ENCODE measurements at regions of chr1 and their contacts with region 1.

Region 1: GRCh38 chr1:108646648-108647269 is 14.1 kb downstream of the HENMT1 start:
- DNase-seq: peak; percentile 51 to 93 (median 86)
- ATAC-seq: peak; percentile 78
- H3K4me3 ChIP-seq: no peak overlapping the region
- H3K27ac ChIP-seq: peak overlapping the region; percentile 75 to 97
- H3K4me1 ChIP-seq: peaks cover 0 to 56% of the 10 kb centered on the region in 2 donors
- H3K27me3 ChIP-seq: no peaks in the 10 kb centered on the region
- CTCF ChIP-seq: no peak

Region 2: DNA sequence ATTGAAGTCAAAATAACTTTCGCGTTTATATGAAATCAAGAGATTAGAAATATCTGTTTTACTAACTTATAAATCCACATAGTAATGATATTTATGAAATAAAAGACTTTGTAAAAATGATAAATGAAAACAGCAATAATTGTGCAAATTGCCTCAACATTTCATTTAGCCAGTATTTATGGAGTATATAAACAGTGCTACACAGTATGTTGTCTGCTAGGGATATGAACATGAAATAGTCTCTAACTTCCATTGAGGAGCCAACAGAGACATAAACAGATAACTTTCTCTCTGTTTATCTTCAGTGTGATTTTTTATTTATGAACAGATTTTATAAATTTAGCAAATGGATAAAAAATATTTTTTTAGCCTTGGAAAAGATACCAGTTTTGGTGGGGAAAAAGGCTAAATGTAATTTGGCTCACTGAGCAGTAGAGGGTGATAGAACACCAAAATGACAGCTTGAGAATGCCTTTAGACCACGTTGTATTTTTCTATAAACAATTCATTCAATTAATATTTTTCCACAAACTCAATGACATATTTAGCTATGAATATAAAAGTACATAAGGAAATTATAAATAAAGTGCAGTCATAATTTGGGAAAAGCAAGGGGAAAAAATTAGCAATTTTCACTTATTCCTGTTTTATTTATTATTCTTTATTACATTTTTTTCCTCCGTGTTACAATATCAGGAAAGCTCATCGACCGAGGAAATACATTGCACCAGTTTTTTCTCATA is 134.3 kb before region 1 on chr1:
- intact Hi-C with region 1: loop called in 1 of 2 experiments (anchors 5 kb)
- DNase-seq: peak in 1 of 4 donors; percentile 52
- ATAC-seq: peak; percentile 78
- H3K4me3 ChIP-seq: no peak overlapping the region
- H3K27ac ChIP-seq: no peak overlapping the region
- H3K4me1 ChIP-seq: no peaks in the 10 kb centered on the region
- H3K27me3 ChIP-seq: no peaks in the 10 kb centered on the region
- CTCF ChIP-seq: peak; percentile 73 to 94

Region 3: DNA sequence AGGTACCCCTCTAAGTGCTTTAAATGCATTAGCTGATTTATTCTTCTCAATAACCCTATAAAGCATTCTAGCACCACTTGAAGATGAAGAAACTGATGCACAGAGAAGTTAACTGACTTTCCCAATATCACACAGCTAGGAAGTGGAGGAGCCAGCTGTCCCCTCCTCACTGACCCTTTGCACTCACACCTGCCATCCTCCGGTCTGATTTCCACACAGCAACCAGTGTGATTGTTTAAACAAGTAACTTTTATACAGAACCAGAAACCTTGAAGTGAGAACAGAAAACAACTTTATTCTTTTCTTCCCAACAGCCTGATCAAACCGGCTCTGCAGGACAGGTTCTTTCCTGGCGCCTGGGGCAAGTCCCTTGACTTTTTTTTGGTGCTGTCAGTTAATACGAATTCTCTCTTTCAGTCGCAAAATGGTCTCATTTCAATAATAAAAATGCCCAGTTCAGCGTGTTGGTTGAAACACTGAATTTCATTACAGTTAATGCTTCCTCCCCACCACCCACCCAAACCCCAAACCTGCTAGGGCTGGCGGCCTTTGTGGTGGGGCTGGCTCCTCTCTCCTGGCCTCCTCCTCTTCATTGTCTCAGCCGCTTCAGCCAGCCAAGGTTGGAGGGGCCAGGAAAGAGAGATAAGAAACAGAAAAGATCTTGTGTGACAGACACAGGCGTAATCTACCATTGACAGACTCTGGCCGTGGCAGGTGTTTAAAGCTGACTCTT is 113.2 kb before region 1 on chr1:
- intact Hi-C with region 1: no loop called
- DNase-seq: peak in 1 of 4 donors; percentile 55
- ATAC-seq: peak; percentile 94
- H3K4me3 ChIP-seq: no peak overlapping the region
- H3K27ac ChIP-seq: no peak overlapping the region
- H3K4me1 ChIP-seq: no peaks in the 10 kb centered on the region
- H3K27me3 ChIP-seq: no peaks in the 10 kb centered on the region
- CTCF ChIP-seq: no peak

Region 4: GRCh38 chr1:108559215-108560186 is 87.3 kb before region 1 on chr1 and contains the start of gene EEIG2:
- intact Hi-C with region 1: no loop called
- DNase-seq: peak; percentile 86 to 98 (median 92)
- ATAC-seq: peak; percentile 95
- H3K4me3 ChIP-seq: peak within 1 kb of the TSS; percentile 55 to 66
- H3K27ac ChIP-seq: peak within 1 kb of the TSS; percentile 76 to 80
- H3K4me1 ChIP-seq: peaks cover 5 to 44% of the 10 kb centered on the region in 2 donors
- H3K27me3 ChIP-seq: no peaks in the 10 kb centered on the region
- CTCF ChIP-seq: peak; percentile 82 to 94
- polyA plus RNA-seq, gene EEIG2: 29.6 to 34.8 (median 32.7) TPM